ENCODE measurements at regions of chr6 and their contacts with region 1.

Region 1: GRCh38 chr6:137218917-137219663 is at the start of gene IFNGR1:
- DNase-seq: peak; percentile 98
- ATAC-seq: peak; percentile 90
- H3K4me3 Mint-ChIP-seq: peak within 1 kb of the TSS; percentile 90
- H3K27ac Mint-ChIP-seq: peak within 1 kb of the TSS; percentile 97
- H3K4me1 Mint-ChIP-seq: peaks cover 49% of the 10 kb centered on the region
- H3K27me3 Mint-ChIP-seq: no peaks in the 10 kb centered on the region
- total RNA-seq, gene IFNGR1: 19.3 to 20.8 TPM

Region 2: DNA sequence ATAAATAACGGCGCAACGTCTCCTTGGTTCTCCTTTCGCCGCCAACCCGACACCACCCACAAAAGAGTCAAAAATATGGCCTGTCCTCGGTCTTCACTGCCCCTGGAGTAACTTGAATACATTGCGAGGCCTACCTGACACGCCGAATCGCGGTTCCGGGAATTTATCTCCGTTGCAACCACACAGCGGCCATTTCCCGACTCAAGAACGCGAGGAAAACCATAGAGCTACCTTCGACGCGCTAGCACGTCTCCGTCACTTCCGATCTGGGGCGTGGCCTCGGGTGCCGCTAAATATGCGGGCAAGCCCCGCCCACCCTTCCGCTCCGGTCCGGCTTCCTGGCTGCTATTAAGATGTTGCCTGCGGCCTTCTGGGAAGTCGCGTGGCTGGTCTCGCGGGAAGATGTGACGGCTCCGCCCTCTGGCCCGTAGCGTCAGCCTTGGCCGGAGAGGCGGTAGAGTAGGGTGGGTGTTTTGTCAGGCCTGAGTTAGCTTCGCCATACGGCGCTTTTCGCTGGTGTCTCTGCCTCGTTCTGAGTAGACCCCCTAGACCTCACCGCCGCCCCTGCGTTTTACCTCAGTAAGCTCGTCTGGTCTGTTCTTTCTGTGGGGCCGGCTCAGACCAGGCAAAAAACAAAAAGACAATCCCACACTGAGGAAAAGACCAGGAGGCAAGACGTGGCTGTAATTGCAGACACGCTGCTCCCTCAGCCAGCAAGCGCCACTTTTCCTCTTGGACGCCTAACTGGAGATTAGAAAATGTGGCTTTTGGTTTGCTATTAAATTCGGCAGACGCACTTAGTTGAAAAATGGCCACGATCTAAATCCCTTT is 929.3 kb before region 1 on chr6 and contains the start of gene BCLAF1:
- CTCF ChIA-PET with region 1: no interaction called
- POLR2A ChIA-PET with region 1: no interaction called
- intact Hi-C with region 1: loop called in 1 of 2 experiments (anchors 2 kb)
- DNase-seq: peak; percentile 100
- ATAC-seq: peak; percentile 83
- H3K4me3 Mint-ChIP-seq: peak within 1 kb of the TSS; percentile 100
- H3K27ac Mint-ChIP-seq: peak within 1 kb of the TSS; percentile 100
- H3K4me1 Mint-ChIP-seq: peaks cover 37% of the 10 kb centered on the region
- H3K27me3 Mint-ChIP-seq: no peaks in the 10 kb centered on the region
- total RNA-seq, gene BCLAF1: 166 to 223 TPM

Region 3: DNA sequence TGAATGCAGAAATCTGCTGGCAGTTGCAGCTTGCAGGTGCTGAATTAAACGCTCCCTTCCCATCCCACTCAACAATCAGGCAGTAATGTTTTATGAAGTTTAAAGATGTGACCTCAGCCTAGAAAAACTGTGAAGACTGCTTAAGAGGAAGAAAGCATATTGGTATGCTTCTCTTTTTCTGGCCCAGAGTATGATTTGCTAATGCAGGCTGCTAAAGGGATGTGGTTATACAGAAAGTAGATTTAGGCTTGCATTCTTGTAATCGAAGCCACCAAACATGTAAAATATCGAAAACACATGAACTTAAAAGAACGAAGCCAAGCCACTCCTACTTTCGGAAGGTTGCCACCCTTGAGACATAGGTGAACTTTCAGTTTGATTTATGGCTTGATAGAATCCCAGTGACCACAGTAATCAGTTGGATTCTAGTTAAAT is 467.6 kb before region 1 on chr6:
- CTCF ChIA-PET with region 1: no interaction called
- POLR2A ChIA-PET with region 1: no interaction called
- intact Hi-C with region 1: loop called in 1 of 2 experiments (anchors 5 kb)
- DNase-seq: peak; percentile 46
- ATAC-seq: peak; percentile 72
- H3K4me3 Mint-ChIP-seq: peak overlapping the region; percentile 42
- H3K27ac Mint-ChIP-seq: peak overlapping the region; percentile 63
- H3K4me1 Mint-ChIP-seq: peaks cover 68% of the 10 kb centered on the region
- H3K27me3 Mint-ChIP-seq: no peaks in the 10 kb centered on the region

Region 4: GRCh38 chr6:137155830-137156229 is 63.3 kb before region 1 on chr6:
- CTCF ChIA-PET with region 1: interaction called, 3 read pairs
- POLR2A ChIA-PET with region 1: interaction called, 4 read pairs
- intact Hi-C with region 1: loop called in 1 of 2 experiments (anchors 1 kb)
- DNase-seq: peak; percentile 54
- ATAC-seq: peak; percentile 96
- H3K4me3 Mint-ChIP-seq: no peak overlapping the region
- H3K27ac Mint-ChIP-seq: peak overlapping the region; percentile 44
- H3K4me1 Mint-ChIP-seq: peaks cover 16% of the 10 kb centered on the region
- H3K27me3 Mint-ChIP-seq: peaks cover 21% of the 10 kb centered on the region

Region 5: GRCh38 chr6:137166247-137167098 is 52.6 kb before region 1 on chr6:
- CTCF ChIA-PET with region 1: no interaction called
- POLR2A ChIA-PET with region 1: no interaction called
- intact Hi-C with region 1: no loop called
- DNase-seq: no peak
- ATAC-seq: no peak
- H3K4me3 Mint-ChIP-seq: no peak overlapping the region
- H3K27ac Mint-ChIP-seq: peak overlapping the region; percentile 26
- H3K4me1 Mint-ChIP-seq: peaks cover 27% of the 10 kb centered on the region
- H3K27me3 Mint-ChIP-seq: peaks cover 20% of the 10 kb centered on the region

Region 6: GRCh38 chr6:137233911-137234863 is 15.1 kb after region 1 on chr6:
- CTCF ChIA-PET with region 1: interaction called, 5 read pairs
- POLR2A ChIA-PET with region 1: interaction called, 4 read pairs
- intact Hi-C with region 1: loop called in 1 of 2 experiments (anchors 2 kb)
- DNase-seq: no peak
- ATAC-seq: peak; percentile 85
- H3K4me3 Mint-ChIP-seq: no peak overlapping the region
- H3K27ac Mint-ChIP-seq: no peak overlapping the region
- H3K4me1 Mint-ChIP-seq: peaks cover 37% of the 10 kb centered on the region
- H3K27me3 Mint-ChIP-seq: peaks cover 9% of the 10 kb centered on the region